ENCODE measurements at regions of chr11 and their contacts with region 1.

Region 1: GRCh38 chr11:27362749-27363575 is at the start of gene CCDC34:
- DNase-seq: peak; percentile 91
- H3K4me3 Mint-ChIP-seq: peak within 1 kb of the TSS; percentile 88
- H3K27ac Mint-ChIP-seq: peak within 1 kb of the TSS; percentile 73
- H3K4me1 Mint-ChIP-seq: peaks cover 20% of the 10 kb centered on the region
- H3K27me3 Mint-ChIP-seq: no peaks in the 10 kb centered on the region
- total RNA-seq, gene CCDC34: 22.8 to 23.7 TPM

Region 2: DNA sequence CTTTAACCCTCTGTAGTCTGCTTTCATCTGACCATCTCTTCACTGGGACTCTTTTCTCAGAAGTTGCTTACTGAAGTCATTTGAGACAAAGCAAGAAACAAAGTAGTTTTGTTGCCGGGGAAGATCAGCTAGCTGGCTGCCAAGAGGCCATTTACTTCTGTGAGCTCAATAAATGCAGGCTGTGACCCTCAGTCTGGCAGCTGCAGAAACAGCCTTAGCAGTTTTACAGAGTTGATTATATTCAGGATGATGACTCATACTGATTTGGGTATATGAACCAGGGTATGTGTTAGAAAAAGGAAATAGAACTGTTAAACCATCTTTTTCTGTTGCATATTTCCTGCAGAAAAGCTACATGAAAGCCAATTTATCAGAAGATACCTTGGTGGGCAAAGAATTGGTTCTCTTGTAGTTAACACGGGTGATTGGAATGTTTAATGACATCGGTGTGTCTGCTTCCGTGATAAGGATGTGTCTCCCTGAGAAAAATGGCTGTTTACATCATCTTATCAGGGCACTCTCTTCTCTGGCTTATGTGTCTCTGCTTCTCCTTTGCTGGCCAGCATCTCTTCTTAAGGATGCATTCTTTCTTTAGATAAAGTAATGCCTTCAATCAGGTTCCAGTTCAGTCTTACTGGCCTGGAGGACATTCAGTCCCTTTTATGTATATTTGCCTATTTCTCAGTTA is 350.6 kb before region 1 on chr11:
- CTCF ChIA-PET with region 1: no interaction called
- POLR2A ChIA-PET with region 1: no interaction called
- intact Hi-C with region 1: no loop called
- DNase-seq: no peak
- H3K4me3 Mint-ChIP-seq: no peak overlapping the region
- H3K27ac Mint-ChIP-seq: no peak overlapping the region
- H3K4me1 Mint-ChIP-seq: no peaks in the 10 kb centered on the region
- H3K27me3 Mint-ChIP-seq: no peaks in the 10 kb centered on the region

Region 3: GRCh38 chr11:27158722-27159679 is 204.0 kb before region 1 on chr11:
- CTCF ChIA-PET with region 1: no interaction called
- POLR2A ChIA-PET with region 1: no interaction called
- intact Hi-C with region 1: no loop called
- DNase-seq: peak; percentile 17
- H3K4me3 Mint-ChIP-seq: no peak overlapping the region
- H3K27ac Mint-ChIP-seq: no peak overlapping the region
- H3K4me1 Mint-ChIP-seq: no peaks in the 10 kb centered on the region
- H3K27me3 Mint-ChIP-seq: no peaks in the 10 kb centered on the region

Region 4: GRCh38 chr11:27296497-27296896 is 66.5 kb before region 1 on chr11:
- CTCF ChIA-PET with region 1: interaction called, 6 read pairs
- POLR2A ChIA-PET with region 1: no interaction called
- intact Hi-C with region 1: loop called (anchors 5 kb)
- DNase-seq: no peak
- H3K4me3 Mint-ChIP-seq: no peak overlapping the region
- H3K27ac Mint-ChIP-seq: no peak overlapping the region
- H3K4me1 Mint-ChIP-seq: peaks cover 6% of the 10 kb centered on the region
- H3K27me3 Mint-ChIP-seq: peaks cover 5% of the 10 kb centered on the region

Region 5: DNA sequence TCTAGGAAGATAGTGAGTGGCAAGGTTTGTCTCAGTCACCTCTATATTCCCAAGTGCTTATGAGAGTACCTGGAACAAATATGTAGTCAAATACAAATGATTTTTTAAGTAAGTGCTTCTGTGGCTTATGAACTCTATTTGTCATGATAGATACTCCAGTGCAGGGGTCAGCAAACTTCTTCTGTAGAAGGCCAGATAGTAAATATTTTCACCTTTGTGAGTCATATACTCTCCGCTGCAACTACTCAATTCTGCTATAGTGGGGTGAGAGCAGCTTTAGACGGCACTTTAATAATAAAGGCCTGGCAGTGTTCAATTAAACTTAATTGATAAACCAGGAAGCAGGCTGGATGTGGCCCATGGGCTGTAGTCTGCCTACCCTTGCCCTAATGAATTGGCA is 12.4 kb after region 1 on chr11:
- CTCF ChIA-PET with region 1: no interaction called
- POLR2A ChIA-PET with region 1: no interaction called
- intact Hi-C with region 1: no loop called
- DNase-seq: no peak
- H3K4me3 Mint-ChIP-seq: no peak overlapping the region
- H3K27ac Mint-ChIP-seq: no peak overlapping the region
- H3K4me1 Mint-ChIP-seq: no peaks in the 10 kb centered on the region
- H3K27me3 Mint-ChIP-seq: no peaks in the 10 kb centered on the region

Region 6: DNA sequence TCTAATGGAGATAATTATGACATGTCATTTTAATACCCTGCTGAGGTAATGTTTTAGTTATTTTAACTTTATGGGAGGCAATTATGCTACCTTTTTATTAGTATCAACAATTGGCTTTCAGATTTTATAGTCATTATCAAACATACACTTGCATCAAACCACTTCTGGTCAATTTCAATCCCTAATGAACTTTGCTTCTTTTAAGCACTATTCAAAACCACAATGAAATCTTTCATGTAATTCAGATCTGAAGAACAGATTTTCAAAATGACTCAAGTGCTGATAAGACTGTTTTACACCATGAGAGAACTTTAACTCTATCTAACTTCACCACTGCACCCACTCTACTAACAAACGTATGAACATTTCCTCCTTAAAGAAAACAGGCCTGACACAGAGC is 25.9 kb after region 1 on chr11:
- CTCF ChIA-PET with region 1: no interaction called
- POLR2A ChIA-PET with region 1: no interaction called
- intact Hi-C with region 1: loop called (anchors 2 kb)
- DNase-seq: no peak
- H3K4me3 Mint-ChIP-seq: no peak overlapping the region
- H3K27ac Mint-ChIP-seq: no peak overlapping the region
- H3K4me1 Mint-ChIP-seq: peaks cover 4% of the 10 kb centered on the region
- H3K27me3 Mint-ChIP-seq: peaks cover 1% of the 10 kb centered on the region

Region 7: DNA sequence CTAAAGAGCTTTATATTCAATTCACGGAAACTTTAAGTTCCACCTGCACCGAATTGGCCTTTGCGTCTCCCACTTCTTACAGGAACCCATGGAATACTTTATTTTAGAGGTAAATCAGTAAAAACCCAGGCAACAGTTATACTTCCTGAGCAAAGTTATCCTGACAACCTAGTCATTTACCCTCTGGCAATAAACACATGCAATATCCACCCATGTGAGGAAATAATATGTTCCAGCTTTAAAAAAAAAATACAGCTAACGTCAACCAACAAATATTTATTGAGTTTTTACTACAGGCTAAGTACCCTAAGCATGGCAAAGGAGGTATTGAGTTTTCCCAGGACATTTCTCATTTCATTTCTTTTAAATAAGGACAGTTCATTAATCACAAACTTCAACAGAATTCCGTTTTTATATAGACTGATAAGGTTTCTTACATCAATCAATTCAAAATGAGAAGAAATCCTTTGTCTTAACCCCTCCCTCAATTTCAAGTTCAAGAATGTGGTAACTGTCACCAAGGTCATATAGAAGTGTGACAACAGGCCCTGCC is 38.4 kb after region 1 on chr11:
- CTCF ChIA-PET with region 1: no interaction called
- POLR2A ChIA-PET with region 1: no interaction called
- intact Hi-C with region 1: no loop called
- DNase-seq: no peak
- H3K4me3 Mint-ChIP-seq: no peak overlapping the region
- H3K27ac Mint-ChIP-seq: no peak overlapping the region
- H3K4me1 Mint-ChIP-seq: no peaks in the 10 kb centered on the region
- H3K27me3 Mint-ChIP-seq: no peaks in the 10 kb centered on the region

Region 8: GRCh38 chr11:27497284-27497866 is 134.4 kb after region 1 on chr11:
- CTCF ChIA-PET with region 1: interaction called, 3 read pairs
- POLR2A ChIA-PET with region 1: no interaction called
- intact Hi-C with region 1: loop called (anchors 1 kb)
- DNase-seq: no peak
- H3K4me3 Mint-ChIP-seq: no peak overlapping the region
- H3K27ac Mint-ChIP-seq: no peak overlapping the region
- H3K4me1 Mint-ChIP-seq: peaks cover 21% of the 10 kb centered on the region
- H3K27me3 Mint-ChIP-seq: no peaks in the 10 kb centered on the region

Region 9: GRCh38 chr11:28107748-28108618 is 745.0 kb after region 1 on chr11 and contains the starts of genes KIF18A and METTL15:
- CTCF ChIA-PET with region 1: no interaction called
- POLR2A ChIA-PET with region 1: no interaction called
- intact Hi-C with region 1: loop called (anchors 1 kb)
- DNase-seq: peak; percentile 99
- H3K4me3 Mint-ChIP-seq: peak within 1 kb of the TSS; percentile 99
- H3K27ac Mint-ChIP-seq: peak within 1 kb of the TSS; percentile 99
- H3K4me1 Mint-ChIP-seq: peaks cover 47% of the 10 kb centered on the region
- H3K27me3 Mint-ChIP-seq: peaks cover 1% of the 10 kb centered on the region
- total RNA-seq, gene KIF18A: 26.4 to 27.3 TPM
- total RNA-seq, gene METTL15: 18.0 to 19.7 TPM

Measured in activated CD4-positive, alpha-beta memory T cell treated with anti-CD3 and anti-CD28 coated beads for 36 hours (primary cell).